AG04449 (cell line): ENCODE measurements at regions of chr2 and their contacts with region 1.

Region 1: GRCh38 chr2:119641562-119642258 is 37.3 kb upstream of the TMEM177 start:
- DNase-seq: no peak
- H3K4me3 ChIP-seq: no peak overlapping the region
- CTCF ChIP-seq: peak; percentile 98

Region 2: DNA sequence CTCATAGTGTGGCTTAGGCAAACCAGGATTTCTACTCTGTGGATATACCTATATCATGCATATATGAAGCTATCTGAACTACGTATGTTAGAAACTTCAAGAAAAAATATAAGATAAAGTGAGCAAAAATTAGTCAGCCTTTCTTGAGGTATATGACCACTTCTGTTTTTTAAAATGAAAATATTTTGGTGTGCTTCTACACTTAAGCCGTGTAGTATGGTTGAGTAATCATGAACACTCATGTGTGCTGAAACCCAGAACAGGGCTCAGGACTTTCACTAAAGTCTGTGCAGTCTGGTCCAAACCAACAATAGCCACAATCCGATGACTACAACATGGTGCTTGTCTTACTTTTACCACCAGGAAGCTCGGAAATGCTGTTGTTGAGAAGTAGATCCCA is 11.6 kb before region 1 on chr2:
- CTCF ChIA-PET with region 1: interaction called, 13 read pairs
- POLR2A ChIA-PET with region 1: no interaction called
- DNase-seq: no peak
- H3K4me3 ChIP-seq: no peak overlapping the region
- CTCF ChIP-seq: no peak

Region 3: GRCh38 chr2:119659601-119660342 is 18.1 kb after region 1 on chr2:
- CTCF ChIA-PET with region 1: interaction called, 269 read pairs
- POLR2A ChIA-PET with region 1: no interaction called
- DNase-seq: no peak
- H3K4me3 ChIP-seq: no peak overlapping the region
- CTCF ChIP-seq: peak; percentile 82

Region 4: GRCh38 chr2:119795309-119796303 is 153.9 kb after region 1 on chr2:
- CTCF ChIA-PET with region 1: no interaction called
- POLR2A ChIA-PET with region 1: no interaction called
- DNase-seq: no peak
- H3K4me3 ChIP-seq: no peak overlapping the region
- CTCF ChIP-seq: no peak